ENCODE measurements at regions of chr20 and their contacts with region 1.

Region 1: DNA sequence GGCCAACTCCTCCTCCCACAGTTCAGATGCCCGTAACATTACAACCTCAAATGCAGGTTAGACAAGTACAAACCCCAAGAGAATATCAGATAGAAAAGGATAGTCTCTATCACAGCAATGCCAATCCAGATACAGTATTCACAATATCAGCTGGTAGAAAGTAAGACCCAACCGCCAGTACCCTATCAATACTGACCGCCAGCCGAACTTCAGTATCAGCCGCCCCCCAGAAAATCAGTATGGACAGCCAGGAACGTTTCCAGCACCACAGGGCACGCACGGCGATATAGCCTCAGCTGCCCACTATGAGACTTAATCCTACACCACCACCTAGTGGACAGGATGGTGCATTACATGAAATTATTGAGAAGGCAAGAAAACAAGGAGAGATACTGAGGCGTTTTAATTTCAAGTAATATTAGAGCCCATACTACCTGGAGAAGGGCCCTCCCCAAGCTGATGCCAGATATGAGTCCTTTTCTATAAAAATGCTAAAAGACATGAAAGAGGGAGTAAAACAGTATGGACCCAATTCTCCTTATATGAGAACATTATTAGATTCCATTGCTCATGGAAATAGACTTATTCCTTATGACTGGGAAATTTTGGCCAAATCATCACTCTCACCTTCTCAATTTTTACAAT is 17.6 kb upstream of the EIF2S2 start:
- DNase-seq: peak; percentile 90
- H3K4me3 Mint-ChIP-seq: peak overlapping the region; percentile 52
- H3K27ac Mint-ChIP-seq: no peak overlapping the region
- H3K4me1 Mint-ChIP-seq: peaks cover 8% of the 10 kb centered on the region
- H3K27me3 Mint-ChIP-seq: peaks cover 19% of the 10 kb centered on the region

Region 2: GRCh38 chr20:33862709-33863403 is 266.8 kb before region 1 on chr20:
- intact Hi-C with region 1: loop called (anchors 5 kb)
- DNase-seq: peak; percentile 84
- H3K4me3 Mint-ChIP-seq: no peak overlapping the region
- H3K27ac Mint-ChIP-seq: no peak overlapping the region
- H3K4me1 Mint-ChIP-seq: peaks cover 23% of the 10 kb centered on the region
- H3K27me3 Mint-ChIP-seq: peaks cover 4% of the 10 kb centered on the region

Region 3: GRCh38 chr20:33915726-33916331 is 213.8 kb before region 1 on chr20:
- intact Hi-C with region 1: loop called (anchors 2 kb)
- DNase-seq: peak; percentile 86
- H3K4me3 Mint-ChIP-seq: no peak overlapping the region
- H3K27ac Mint-ChIP-seq: no peak overlapping the region
- H3K4me1 Mint-ChIP-seq: peaks cover 15% of the 10 kb centered on the region
- H3K27me3 Mint-ChIP-seq: peaks cover 19% of the 10 kb centered on the region

Region 4: DNA sequence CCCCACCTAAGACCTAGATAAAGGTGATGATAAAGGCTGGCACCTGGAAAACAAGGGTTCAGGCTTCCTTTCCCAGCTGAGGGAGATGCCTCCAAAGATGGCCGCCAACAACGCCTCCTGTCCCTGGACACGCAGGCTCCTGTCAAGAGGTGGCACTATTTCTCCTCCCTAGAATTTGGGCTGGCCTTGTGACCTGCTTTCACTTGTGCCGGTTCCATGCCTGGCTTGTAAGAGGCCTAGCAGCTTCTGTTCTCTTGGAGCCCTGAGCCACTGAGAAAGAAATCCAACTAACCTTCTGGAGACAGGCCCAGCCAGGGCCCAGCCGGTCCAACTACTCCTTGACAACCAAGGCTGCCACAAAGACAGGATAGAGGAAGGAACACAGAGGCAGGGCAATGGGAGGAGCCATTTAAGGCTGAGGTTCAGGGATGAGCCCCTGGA is 196.2 kb before region 1 on chr20:
- intact Hi-C with region 1: loop called (anchors 1 kb)
- DNase-seq: peak; percentile 89
- H3K4me3 Mint-ChIP-seq: no peak overlapping the region
- H3K27ac Mint-ChIP-seq: no peak overlapping the region
- H3K4me1 Mint-ChIP-seq: peaks cover 2% of the 10 kb centered on the region
- H3K27me3 Mint-ChIP-seq: peaks cover 2% of the 10 kb centered on the region

Region 5: GRCh38 chr20:34069341-34070078 is 60.1 kb before region 1 on chr20:
- intact Hi-C with region 1: loop called (anchors 1 kb)
- DNase-seq: peak; percentile 86
- H3K4me3 Mint-ChIP-seq: no peak overlapping the region
- H3K27ac Mint-ChIP-seq: no peak overlapping the region
- H3K4me1 Mint-ChIP-seq: peaks cover 31% of the 10 kb centered on the region
- H3K27me3 Mint-ChIP-seq: no peaks in the 10 kb centered on the region

Measured in activated CD4-positive, alpha-beta T cell treated with anti-CD3 and anti-CD28 coated beads, Interleukin-2, amount 10 ng/mL, durations not matched to agents 24 days and 14 days (primary cell).